K562 (cell line): ENCODE measurements at regions of chr5 and their contacts with region 1.

Region 1: DNA sequence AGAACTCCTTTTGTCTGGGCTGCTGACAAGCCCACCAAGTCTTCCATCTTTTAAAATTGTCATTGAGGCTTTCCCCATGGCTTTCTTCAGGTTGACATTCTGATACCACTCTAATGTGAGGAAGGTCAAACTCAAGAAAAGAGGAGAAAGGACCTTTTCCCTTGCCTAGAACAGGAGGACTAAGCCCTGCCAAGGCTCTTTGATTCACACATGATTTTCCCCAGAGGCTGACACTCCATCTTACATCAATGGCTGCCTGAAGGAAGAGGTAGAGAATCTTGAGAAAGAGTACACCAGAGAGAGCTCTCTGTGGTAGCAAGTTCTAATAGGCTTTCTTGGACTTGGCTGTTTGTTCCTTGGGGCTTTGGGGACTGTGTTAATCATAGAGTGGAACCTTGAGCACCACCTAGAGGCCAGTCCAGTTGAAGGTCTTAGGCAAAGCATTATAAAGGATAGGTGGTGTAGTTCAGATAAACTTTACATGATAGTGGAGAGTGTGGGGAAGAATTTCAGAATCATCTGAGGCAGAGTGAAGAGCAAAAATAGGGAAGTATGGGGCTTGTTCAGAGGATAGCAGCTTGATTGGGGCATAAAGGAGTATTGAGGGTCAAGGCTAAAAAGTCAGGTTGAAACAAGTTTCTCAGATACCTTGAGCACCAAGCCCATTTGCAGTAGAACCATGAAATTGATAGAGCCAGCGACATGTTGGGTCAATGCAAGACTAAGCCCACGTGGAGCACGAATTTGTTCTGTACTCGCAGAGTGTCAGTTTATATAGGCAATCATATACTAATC is 36.7 kb downstream of the NDFIP1 start:
- DNase-seq: peak; percentile 54 to 78 (median 63)
- ATAC-seq: peak; percentile 96
- H3K4me3 ChIP-seq: no peak overlapping the region
- H3K27ac ChIP-seq: no peak overlapping the region
- H3K4me1 ChIP-seq: no peaks in the 10 kb centered on the region
- H3K27me3 ChIP-seq: no peaks in the 10 kb centered on the region
- CTCF ChIP-seq: peak; percentile 71 to 80 (median 79)
- EP300 ChIP-seq: no peak
- POLR2A ChIP-seq: no peak
- RAD21 ChIP-seq: peak; percentile 39 to 62

Region 2: DNA sequence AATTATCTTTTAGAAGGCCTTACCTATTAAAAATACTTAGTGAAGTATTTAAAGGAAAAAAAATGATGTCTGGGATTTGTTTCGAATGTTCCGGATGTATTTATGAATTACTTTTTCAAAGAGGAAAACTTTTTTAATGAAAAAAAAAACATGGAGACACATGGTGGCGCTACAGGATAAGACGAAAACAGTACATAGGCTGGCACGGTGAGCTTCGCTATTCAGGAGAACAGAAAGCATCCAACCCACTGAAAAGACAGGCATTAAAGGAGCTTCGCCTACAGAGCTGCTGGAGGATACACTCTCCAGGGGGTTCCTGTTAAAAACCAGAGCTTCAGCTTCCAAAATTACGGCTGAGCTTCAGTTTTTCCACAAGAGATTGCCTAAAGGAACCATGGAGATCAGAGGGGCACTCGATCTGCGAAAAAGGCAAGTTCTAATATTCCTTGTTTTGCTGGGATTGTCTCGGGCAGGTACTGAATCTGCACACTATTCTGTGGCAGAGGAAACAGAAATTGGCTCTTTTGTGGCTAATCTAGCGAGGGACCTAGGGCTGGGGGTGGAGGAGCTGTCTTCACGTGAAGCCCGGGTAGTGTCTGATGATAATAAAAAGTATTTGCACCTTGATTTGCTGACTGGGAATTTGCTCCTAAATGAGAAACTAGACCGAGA is 922.1 kb before region 1 on chr5 and contains the start of gene PCDHB14:
- CTCF ChIA-PET with region 1: no interaction called
- POLR2A ChIA-PET with region 1: no interaction called
- in situ Hi-C with region 1: loop called (anchors 25 kb)
- intact Hi-C with region 1: no loop called
- DNase-seq: peak in 3 of 4 experiments; percentile 8 to 30 (median 18)
- ATAC-seq: peak; percentile 77
- H3K4me3 ChIP-seq: no peak within 1 kb of the TSS
- H3K27ac ChIP-seq: no peak within 1 kb of the TSS
- H3K4me1 ChIP-seq: no peaks in the 10 kb centered on the region
- H3K27me3 ChIP-seq: peaks cover 0 to 6% of the 10 kb centered on the region in 2 experiments; a peak in 2 of 5 replicates
- CTCF ChIP-seq: peak; percentile 34 to 64 (median 52); a peak in 5 of 6 replicates
- EP300 ChIP-seq: no peak
- POLR2A ChIP-seq: no peak
- RAD21 ChIP-seq: no peak; a peak in 1 of 4 replicates
- polyA plus RNA-seq, gene PCDHB14: not detected

Region 3: GRCh38 chr5:141691867-141692532 is 453.3 kb before region 1 on chr5:
- CTCF ChIA-PET with region 1: interaction called, 6 read pairs
- POLR2A ChIA-PET with region 1: interaction called, 4 read pairs
- in situ Hi-C with region 1: no loop called
- intact Hi-C with region 1: loop called (anchors 2 kb)
- DNase-seq: peak; percentile 84 to 90 (median 88)
- ATAC-seq: peak; percentile 89
- H3K4me3 ChIP-seq: peak overlapping the region; percentile 17
- H3K27ac ChIP-seq: peak overlapping the region; percentile 81
- H3K4me1 ChIP-seq: peaks cover 38 to 55% of the 10 kb centered on the region in 2 experiments
- H3K27me3 ChIP-seq: peaks cover 0 to 12% of the 10 kb centered on the region in 2 experiments; a peak in 3 of 5 replicates
- CTCF ChIP-seq: peak; percentile 97 to 99 (median 98)
- EP300 ChIP-seq: no peak
- POLR2A ChIP-seq: no peak
- RAD21 ChIP-seq: peak; percentile 94 to 95

Region 4: GRCh38 chr5:141889282-141889871 is 255.9 kb before region 1 on chr5:
- CTCF ChIA-PET with region 1: no interaction called
- POLR2A ChIA-PET with region 1: no interaction called
- in situ Hi-C with region 1: no loop called
- intact Hi-C with region 1: loop called (anchors 2 kb)
- DNase-seq: peak in 2 of 4 experiments; percentile 29 to 30
- ATAC-seq: peak; percentile 82
- H3K4me3 ChIP-seq: no peak overlapping the region
- H3K27ac ChIP-seq: no peak overlapping the region
- H3K4me1 ChIP-seq: no peaks in the 10 kb centered on the region; a peak in 1 of 5 replicates
- H3K27me3 ChIP-seq: peaks cover 6 to 7% of the 10 kb centered on the region in 2 experiments
- CTCF ChIP-seq: peak; percentile 36 to 79 (median 54); a peak in 5 of 6 replicates
- EP300 ChIP-seq: no peak
- POLR2A ChIP-seq: no peak
- RAD21 ChIP-seq: peak; percentile 63 to 75

Region 5: GRCh38 chr5:142006363-142007236 is 138.7 kb before region 1 on chr5:
- CTCF ChIA-PET with region 1: interaction called, 4 read pairs
- POLR2A ChIA-PET with region 1: interaction called, 3 read pairs
- in situ Hi-C with region 1: loop called (anchors 5 kb)
- intact Hi-C with region 1: no loop called
- DNase-seq: no peak
- ATAC-seq: no peak
- H3K4me3 ChIP-seq: no peak overlapping the region
- H3K27ac ChIP-seq: no peak overlapping the region
- H3K4me1 ChIP-seq: peaks cover 12 to 13% of the 10 kb centered on the region in 2 experiments
- H3K27me3 ChIP-seq: no peaks in the 10 kb centered on the region
- CTCF ChIP-seq: no peak
- EP300 ChIP-seq: no peak
- POLR2A ChIP-seq: no peak
- RAD21 ChIP-seq: no peak

Region 6: DNA sequence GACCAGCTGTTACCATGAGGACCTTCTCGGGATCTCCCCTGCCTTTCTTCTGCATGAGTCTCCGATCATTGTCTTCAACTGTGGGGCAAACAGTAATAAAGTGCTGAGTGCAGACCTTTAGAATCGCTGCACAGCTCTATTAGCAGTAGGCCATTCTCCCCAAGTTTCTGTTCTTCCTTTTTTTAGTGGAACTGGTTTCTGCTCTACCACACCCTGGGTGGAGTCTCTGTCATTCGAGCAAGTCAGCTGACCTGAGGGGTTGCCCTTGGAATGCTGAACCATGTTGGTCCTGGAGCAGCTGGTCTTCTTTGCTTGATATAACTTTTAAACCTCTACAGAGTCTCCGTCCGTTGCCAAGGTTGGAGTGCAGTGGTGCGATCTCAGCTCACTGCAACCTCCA is 99.1 kb before region 1 on chr5:
- CTCF ChIA-PET with region 1: interaction called, 3 read pairs
- POLR2A ChIA-PET with region 1: no interaction called
- in situ Hi-C with region 1: no loop called
- intact Hi-C with region 1: loop called (anchors 5 kb)
- DNase-seq: peak in 1 of 4 experiments; percentile 35
- ATAC-seq: peak; percentile 65; the same call in 2 of the 3 replicates
- H3K4me3 ChIP-seq: no peak overlapping the region
- H3K27ac ChIP-seq: no peak overlapping the region
- H3K4me1 ChIP-seq: peaks cover 0 to 3% of the 10 kb centered on the region in 2 experiments; a peak in 2 of 5 replicates
- H3K27me3 ChIP-seq: no peaks in the 10 kb centered on the region
- CTCF ChIP-seq: no peak
- EP300 ChIP-seq: no peak
- POLR2A ChIP-seq: no peak
- RAD21 ChIP-seq: no peak

Region 7: GRCh38 chr5:142192286-142193113 is 47.2 kb after region 1 on chr5:
- CTCF ChIA-PET with region 1: no interaction called
- POLR2A ChIA-PET with region 1: no interaction called
- in situ Hi-C with region 1: no loop called
- intact Hi-C with region 1: no loop called
- DNase-seq: no peak
- ATAC-seq: no peak
- H3K4me3 ChIP-seq: no peak overlapping the region
- H3K27ac ChIP-seq: no peak overlapping the region
- H3K4me1 ChIP-seq: 0 out of 5 replicates have a peak, but pooled peaks cover 0 to under 1% of the 10 kb centered on the region in 2 experiments
- H3K27me3 ChIP-seq: peaks cover 33 to 45% of the 10 kb centered on the region in 2 experiments; a peak in 3 of 5 replicates
- CTCF ChIP-seq: no peak
- EP300 ChIP-seq: no peak
- POLR2A ChIP-seq: no peak
- RAD21 ChIP-seq: no peak